IMR-90 (cell line): ENCODE measurements at regions of chr18 and their contacts with region 1.

Region 1: DNA sequence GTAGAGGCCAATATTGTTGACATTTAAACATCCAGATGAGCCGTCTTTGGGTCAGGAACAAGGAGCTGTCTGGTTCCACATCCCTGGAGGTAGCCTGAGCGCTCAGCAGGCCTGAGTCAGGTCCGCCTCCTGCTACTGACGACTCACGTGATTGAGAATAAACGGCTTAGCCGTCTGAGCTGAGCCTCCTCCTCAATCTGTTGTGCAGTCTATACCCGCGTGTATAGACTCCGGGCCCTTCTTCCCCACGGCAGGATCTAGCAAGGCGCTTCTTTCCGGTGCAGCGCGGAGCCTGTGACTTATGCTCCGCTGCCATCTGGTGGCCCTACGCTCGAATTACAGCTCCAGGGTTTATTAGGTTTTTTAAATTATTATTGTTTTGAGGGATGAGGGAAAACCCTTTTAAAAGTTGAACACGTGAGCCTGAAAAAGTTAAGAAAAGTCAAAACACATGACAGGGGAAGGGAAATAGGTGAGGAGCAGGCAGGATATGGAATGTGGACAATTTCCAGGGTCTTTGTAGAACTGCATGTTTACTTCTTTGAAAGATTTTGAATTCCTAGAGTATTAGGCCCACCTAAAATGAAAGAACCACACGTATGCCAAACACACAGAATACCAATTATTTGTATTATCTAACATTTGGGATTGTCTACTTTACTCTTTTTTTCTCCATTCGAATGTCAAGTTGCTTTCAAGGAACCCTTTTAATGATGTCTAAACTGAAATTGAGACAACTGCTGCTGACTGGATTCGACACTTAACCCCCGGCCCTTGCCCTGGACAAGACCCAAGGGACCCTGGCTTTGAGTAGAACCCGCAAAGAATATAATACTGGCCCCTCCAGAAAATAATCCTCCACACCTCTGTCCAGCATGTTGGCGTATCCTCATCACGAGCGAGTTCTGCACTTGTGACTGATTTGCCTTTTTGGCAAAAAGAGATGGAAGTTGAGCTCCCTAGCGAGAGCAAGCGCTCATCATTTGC is 112.4 kb upstream of the ZNF236 start:
- DNase-seq: peak; percentile 65
- ATAC-seq: peak; percentile 99
- H3K4me3 ChIP-seq: no peak overlapping the region
- H3K27ac ChIP-seq: no peak overlapping the region
- H3K4me1 ChIP-seq: no peaks in the 10 kb centered on the region
- H3K27me3 ChIP-seq: no peaks in the 10 kb centered on the region; the same call in 1 of the 2 replicates
- CTCF ChIP-seq: peak; percentile 97
- POLR2A ChIP-seq: peak; percentile 43; the same call in 1 of the 2 replicates
- RAD21 ChIP-seq: peak; percentile 98

Region 2: GRCh38 chr18:76264198-76264875 is 445.6 kb before region 1 on chr18:
- CTCF ChIA-PET with region 1: no interaction called
- POLR2A ChIA-PET with region 1: no interaction called
- dilution Hi-C with region 1: no loop called
- in situ Hi-C with region 1: no loop called
- intact Hi-C with region 1: loop called (anchors 5 kb)
- DNase-seq: no peak
- ATAC-seq: no peak
- H3K4me3 ChIP-seq: no peak overlapping the region
- H3K27ac ChIP-seq: no peak overlapping the region
- H3K4me1 ChIP-seq: peaks cover 3% of the 10 kb centered on the region; the same call in 1 of the 2 replicates
- H3K27me3 ChIP-seq: peaks cover 2% of the 10 kb centered on the region; the same call in 1 of the 2 replicates
- CTCF ChIP-seq: no peak
- POLR2A ChIP-seq: no peak
- RAD21 ChIP-seq: no peak

Region 3: GRCh38 chr18:76697441-76697901 is 12.5 kb before region 1 on chr18:
- CTCF ChIA-PET with region 1: no interaction called
- POLR2A ChIA-PET with region 1: no interaction called
- dilution Hi-C with region 1: no loop called
- in situ Hi-C with region 1: no loop called
- intact Hi-C with region 1: loop called (anchors 1 kb)
- DNase-seq: peak; percentile 12
- ATAC-seq: peak; percentile 80
- H3K4me3 ChIP-seq: no peak overlapping the region
- H3K27ac ChIP-seq: no peak overlapping the region
- H3K4me1 ChIP-seq: no peaks in the 10 kb centered on the region
- H3K27me3 ChIP-seq: peaks cover 13% of the 10 kb centered on the region
- CTCF ChIP-seq: no peak
- POLR2A ChIP-seq: no peak
- RAD21 ChIP-seq: no peak